CD4-positive, alpha-beta T cell (primary cell): ENCODE measurements at regions of chr19 and their contacts with region 1.

Region 1: DNA sequence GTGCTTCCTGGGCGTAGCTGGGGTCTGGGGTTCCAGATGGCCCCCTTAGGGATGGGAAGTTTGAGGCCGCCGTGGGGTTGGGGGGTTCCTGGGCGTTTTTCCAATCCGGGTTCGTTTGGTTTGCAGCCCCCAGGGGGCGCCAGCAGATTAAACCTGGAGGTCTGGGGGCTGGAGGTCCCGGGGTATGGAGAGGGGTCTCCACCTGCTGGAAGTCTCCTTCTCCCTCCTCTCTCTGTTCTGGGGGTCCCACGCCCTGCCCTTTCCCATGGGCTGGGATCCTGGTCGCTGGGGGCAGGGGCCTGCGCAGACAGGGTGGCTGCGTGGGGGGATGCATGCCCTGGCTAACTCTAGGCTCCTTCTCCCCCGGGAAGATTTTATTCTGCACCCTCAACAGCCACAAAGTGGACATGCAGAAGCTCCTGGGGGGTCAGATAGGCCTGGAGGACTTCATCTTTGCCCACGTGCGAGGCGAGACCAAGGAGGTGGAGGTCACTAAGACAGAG is 897 bp downstream of the GIPC3 start:
- DNase-seq: peak in 12 of 14 experiments; percentile 24 to 72 (median 42)
- ATAC-seq: peak; percentile 51
- H3K4me3 ChIP-seq: peak overlapping the region; percentile 54
- H3K4me3 Mint-ChIP-seq: peak overlapping the region; percentile 60
- H3K27ac ChIP-seq: no peak overlapping the region
- H3K27ac Mint-ChIP-seq: no peak overlapping the region
- H3K4me1 ChIP-seq: peaks cover 11% of the 10 kb centered on the region
- H3K4me1 Mint-ChIP-seq: no peaks in the 10 kb centered on the region
- H3K27me3 ChIP-seq: no peaks in the 10 kb centered on the region
- H3K27me3 Mint-ChIP-seq: no peaks in the 10 kb centered on the region
- CTCF ChIP-seq: peak; percentile 79

Region 2: GRCh38 chr19:3210347-3211017 is 375.7 kb before region 1 on chr19:
- CTCF ChIA-PET with region 1: no interaction called
- POLR2A ChIA-PET with region 1: no interaction called
- intact Hi-C with region 1: no loop called
- DNase-seq: peak; percentile 52 to 78 (median 66)
- ATAC-seq: peak; percentile 94
- H3K4me3 ChIP-seq: no peak overlapping the region
- H3K4me3 Mint-ChIP-seq: no peak overlapping the region
- H3K27ac ChIP-seq: no peak overlapping the region
- H3K27ac Mint-ChIP-seq: no peak overlapping the region
- H3K4me1 ChIP-seq: peaks cover 6% of the 10 kb centered on the region
- H3K4me1 Mint-ChIP-seq: no peaks in the 10 kb centered on the region
- H3K27me3 ChIP-seq: no peaks in the 10 kb centered on the region
- H3K27me3 Mint-ChIP-seq: no peaks in the 10 kb centered on the region
- CTCF ChIP-seq: peak; percentile 70

Region 3: GRCh38 chr19:3618144-3618810 is 32.1 kb after region 1 on chr19:
- CTCF ChIA-PET with region 1: no interaction called
- POLR2A ChIA-PET with region 1: no interaction called
- intact Hi-C with region 1: loop called in 1 of 2 experiments (anchors 1 kb)
- DNase-seq: peak in 13 of 14 experiments; percentile 25 to 69 (median 44)
- ATAC-seq: peak; percentile 50
- H3K4me3 ChIP-seq: no peak overlapping the region
- H3K4me3 Mint-ChIP-seq: no peak overlapping the region
- H3K27ac ChIP-seq: no peak overlapping the region
- H3K27ac Mint-ChIP-seq: no peak overlapping the region
- H3K4me1 ChIP-seq: peaks cover 15% of the 10 kb centered on the region
- H3K4me1 Mint-ChIP-seq: peaks cover 7% of the 10 kb centered on the region
- H3K27me3 ChIP-seq: no peaks in the 10 kb centered on the region
- H3K27me3 Mint-ChIP-seq: no peaks in the 10 kb centered on the region
- CTCF ChIP-seq: peak; percentile 82

Region 4: DNA sequence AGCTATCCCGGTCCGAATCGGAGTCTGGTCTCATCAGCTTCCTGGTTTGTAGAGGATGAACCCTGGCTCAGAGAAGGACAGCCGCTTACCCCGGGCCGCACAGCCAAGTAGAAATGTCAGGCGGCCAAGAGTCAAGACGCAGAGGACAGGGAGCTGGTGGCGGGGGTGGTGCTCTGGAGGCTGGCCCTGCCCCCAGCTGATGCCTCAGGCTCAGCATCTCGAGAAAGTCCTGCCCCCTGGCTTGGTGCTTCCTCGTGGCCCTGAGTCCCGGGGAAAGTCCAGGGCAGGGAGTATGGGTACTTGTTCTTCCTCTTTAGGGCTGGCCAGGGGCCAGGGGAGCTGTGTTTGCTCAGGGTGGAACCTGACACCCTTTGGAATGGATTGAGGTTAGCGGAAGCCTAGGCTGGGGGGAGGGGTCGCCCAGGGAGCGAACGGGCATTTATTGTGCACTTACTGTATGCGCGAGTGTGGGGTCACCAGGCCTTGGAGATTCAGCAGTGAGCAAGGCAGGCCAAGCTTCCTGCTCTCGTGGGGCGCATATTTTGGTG is 124.2 kb after region 1 on chr19:
- CTCF ChIA-PET with region 1: no interaction called
- POLR2A ChIA-PET with region 1: no interaction called
- intact Hi-C with region 1: loop called in 1 of 2 experiments (anchors 5 kb)
- DNase-seq: peak in 2 of 14 experiments; percentile 67 to 77
- ATAC-seq: no peak
- H3K4me3 ChIP-seq: no peak overlapping the region
- H3K4me3 Mint-ChIP-seq: no peak overlapping the region
- H3K27ac ChIP-seq: no peak overlapping the region
- H3K27ac Mint-ChIP-seq: no peak overlapping the region
- H3K4me1 ChIP-seq: peaks cover 8% of the 10 kb centered on the region
- H3K4me1 Mint-ChIP-seq: peaks cover 6% of the 10 kb centered on the region
- H3K27me3 ChIP-seq: peaks cover 0 to 10% of the 10 kb centered on the region in 2 experiments
- H3K27me3 Mint-ChIP-seq: peaks cover 7% of the 10 kb centered on the region
- CTCF ChIP-seq: no peak